Panc1 (cell line): ENCODE measurements at regions of chr6 and their contacts with region 1.

Region 1: DNA sequence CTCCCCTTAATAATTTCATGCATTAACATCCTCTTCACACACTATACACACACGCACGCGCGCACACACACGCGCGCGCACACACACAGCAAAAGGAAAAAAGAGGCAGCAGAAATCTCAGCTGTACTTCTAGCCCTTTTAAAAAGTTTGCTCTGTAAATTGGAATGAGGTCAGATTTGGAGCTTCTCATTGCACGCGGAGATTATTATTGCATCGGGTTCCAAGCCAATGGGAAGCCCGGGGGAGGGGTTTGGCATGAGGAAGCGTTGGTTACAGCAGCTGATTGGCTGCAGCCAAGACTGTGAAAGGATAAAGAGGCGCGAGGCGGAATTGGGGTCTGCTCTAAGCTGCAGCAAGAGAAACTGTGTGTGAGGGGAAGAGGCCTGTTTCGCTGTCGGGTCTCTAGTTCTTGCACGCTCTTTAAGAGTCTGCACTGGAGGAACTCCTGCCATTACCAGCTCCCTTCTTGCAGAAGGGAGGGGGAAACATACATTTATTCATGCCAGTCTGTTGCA is at the start of gene SOX4:
- DNase-seq: peak; percentile 82
- ATAC-seq: peak; percentile 80
- H3K4me3 ChIP-seq: peak within 1 kb of the TSS; percentile 95 to 96
- H3K27ac ChIP-seq: peak within 1 kb of the TSS; percentile 96
- H3K4me1 ChIP-seq: peaks cover 25% of the 10 kb centered on the region
- H3K27me3 ChIP-seq: no peaks in the 10 kb centered on the region
- CTCF ChIP-seq: no peak
- total RNA-seq, gene SOX4: 71.9 TPM

Region 2: DNA sequence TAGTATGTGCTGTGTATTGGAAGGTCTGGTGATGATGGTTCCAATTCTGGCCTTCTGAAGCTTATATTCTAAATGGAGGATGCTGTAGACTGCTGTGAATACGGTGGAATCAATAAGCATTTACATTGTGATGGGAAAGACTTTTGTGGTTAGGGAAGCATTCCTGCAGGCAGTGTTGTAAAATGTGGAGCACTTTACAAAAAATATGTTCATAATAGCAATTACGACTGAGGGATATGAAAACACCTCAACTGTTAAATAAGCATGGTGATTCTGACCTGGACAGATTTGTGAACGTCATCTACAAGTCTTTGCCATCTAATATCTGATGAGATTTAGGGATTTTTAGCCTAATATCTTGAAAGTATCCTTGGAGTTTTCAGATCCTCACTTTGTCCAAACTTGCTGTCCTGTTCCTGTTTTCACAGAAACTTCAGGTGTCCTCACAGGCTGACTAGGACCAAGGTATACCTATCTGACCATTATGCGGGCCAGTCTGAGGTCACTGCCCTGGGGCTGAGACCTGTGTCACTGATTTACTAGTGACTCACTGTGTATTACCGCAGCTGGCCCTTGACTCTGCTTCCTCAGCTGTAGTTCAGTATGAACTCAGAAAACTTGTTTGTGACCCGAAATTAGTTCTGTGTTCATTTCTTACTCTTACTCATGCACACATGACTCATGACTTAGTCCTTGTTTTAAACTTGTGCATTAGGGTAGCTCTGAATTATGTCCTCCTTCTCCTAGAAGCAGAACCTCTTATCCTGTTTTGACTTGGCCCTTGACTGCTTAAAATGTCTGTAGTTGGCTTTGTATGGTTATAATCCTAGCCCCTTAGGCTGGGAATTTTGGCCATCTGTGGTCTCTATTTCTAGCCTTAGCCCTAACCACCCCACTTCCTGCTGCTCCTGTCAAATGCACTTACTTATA is 716.2 kb before region 1 on chr6:
- CTCF ChIA-PET with region 1: interaction called, 6 read pairs
- POLR2A ChIA-PET with region 1: interaction called, 8 read pairs
- in situ Hi-C with region 1: no loop called
- intact Hi-C with region 1: loop called (anchors 5 kb)
- DNase-seq: peak; percentile 93
- ATAC-seq: peak; percentile 100
- H3K4me3 ChIP-seq: 0 out of 4 replicates have a peak overlapping the region, but pooled peaks of 1 of the 2 experiments have one; percentile 5
- H3K27ac ChIP-seq: peak overlapping the region; percentile 83
- H3K4me1 ChIP-seq: peaks cover 24% of the 10 kb centered on the region
- H3K27me3 ChIP-seq: no peaks in the 10 kb centered on the region
- CTCF ChIP-seq: no peak

Region 3: GRCh38 chr6:21132856-21133838 is 460.3 kb before region 1 on chr6:
- CTCF ChIA-PET with region 1: no interaction called
- POLR2A ChIA-PET with region 1: interaction called, 11 read pairs
- in situ Hi-C with region 1: no loop called
- intact Hi-C with region 1: no loop called
- DNase-seq: no peak
- ATAC-seq: no peak
- H3K4me3 ChIP-seq: no peak overlapping the region
- H3K27ac ChIP-seq: 0 out of 2 replicates have a peak overlapping the region, but pooled peaks have one; percentile 7
- H3K4me1 ChIP-seq: peaks cover 2% of the 10 kb centered on the region; the same call in 1 of the 2 replicates
- H3K27me3 ChIP-seq: no peaks in the 10 kb centered on the region
- CTCF ChIP-seq: no peak

Region 4: GRCh38 chr6:21494505-21494904 is 99.0 kb before region 1 on chr6:
- CTCF ChIA-PET with region 1: no interaction called
- POLR2A ChIA-PET with region 1: no interaction called
- in situ Hi-C with region 1: no loop called
- intact Hi-C with region 1: no loop called
- DNase-seq: no peak
- ATAC-seq: no peak
- H3K4me3 ChIP-seq: no peak overlapping the region
- H3K27ac ChIP-seq: no peak overlapping the region
- H3K4me1 ChIP-seq: no peaks in the 10 kb centered on the region
- H3K27me3 ChIP-seq: no peaks in the 10 kb centered on the region
- CTCF ChIP-seq: no peak

Region 5: GRCh38 chr6:21742238-21742660 is 148.8 kb after region 1 on chr6:
- CTCF ChIA-PET with region 1: interaction called, 3 read pairs
- POLR2A ChIA-PET with region 1: no interaction called
- in situ Hi-C with region 1: no loop called
- intact Hi-C with region 1: loop called (anchors 5 kb)
- DNase-seq: no peak
- ATAC-seq: peak; percentile 39; the same call in 1 of the 2 replicates
- H3K4me3 ChIP-seq: peak overlapping the region in 1 of 2 experiments; percentile 26; a peak in 2 of 4 replicates
- H3K27ac ChIP-seq: peak overlapping the region; percentile 61
- H3K4me1 ChIP-seq: peaks cover 61% of the 10 kb centered on the region
- H3K27me3 ChIP-seq: no peaks in the 10 kb centered on the region
- CTCF ChIP-seq: no peak

Region 6: GRCh38 chr6:21935561-21936028 is 342.1 kb after region 1 on chr6:
- CTCF ChIA-PET with region 1: no interaction called
- POLR2A ChIA-PET with region 1: no interaction called
- in situ Hi-C with region 1: no loop called
- intact Hi-C with region 1: loop called (anchors 5 kb)
- DNase-seq: no peak
- ATAC-seq: peak; percentile 71
- H3K4me3 ChIP-seq: no peak overlapping the region
- H3K27ac ChIP-seq: peak overlapping the region; percentile 45; the same call in 1 of the 2 replicates
- H3K4me1 ChIP-seq: no peaks in the 10 kb centered on the region
- H3K27me3 ChIP-seq: no peaks in the 10 kb centered on the region
- CTCF ChIP-seq: peak; percentile 69

Region 7: DNA sequence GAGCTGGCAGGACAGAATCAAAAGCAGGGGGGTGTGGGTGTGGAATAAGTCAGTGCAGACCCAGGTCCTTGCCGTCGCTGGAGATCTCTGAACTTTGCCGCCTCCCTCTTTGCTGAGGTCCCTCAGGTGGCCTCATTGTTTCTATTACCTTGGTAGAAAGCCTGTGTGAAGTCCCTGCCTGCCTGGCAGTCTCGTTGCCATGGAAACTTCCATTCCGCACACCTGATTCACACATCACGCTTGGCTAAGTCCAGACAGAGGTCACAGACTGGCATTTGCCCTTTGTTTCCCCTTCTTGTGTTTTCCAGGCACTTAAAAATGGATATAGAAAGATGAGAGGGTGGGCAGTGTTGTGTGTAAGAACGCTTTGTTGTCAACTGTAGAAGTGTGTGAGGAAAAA is 442.8 kb after region 1 on chr6:
- CTCF ChIA-PET with region 1: no interaction called
- POLR2A ChIA-PET with region 1: no interaction called
- in situ Hi-C with region 1: no loop called
- intact Hi-C with region 1: no loop called
- DNase-seq: peak; percentile 7
- ATAC-seq: peak; percentile 80
- H3K4me3 ChIP-seq: no peak overlapping the region
- H3K27ac ChIP-seq: peak overlapping the region; percentile 55
- H3K4me1 ChIP-seq: peaks cover 14% of the 10 kb centered on the region
- H3K27me3 ChIP-seq: no peaks in the 10 kb centered on the region
- CTCF ChIP-seq: no peak

Region 8: GRCh38 chr6:22828179-22829062 is 1235.0 kb after region 1 on chr6:
- CTCF ChIA-PET with region 1: no interaction called
- POLR2A ChIA-PET with region 1: no interaction called
- in situ Hi-C with region 1: no loop called
- intact Hi-C with region 1: loop called (anchors 5 kb)
- DNase-seq: peak; percentile 74
- ATAC-seq: peak; percentile 87
- H3K4me3 ChIP-seq: peak overlapping the region; percentile 3 to 40; a peak in 2 of 4 replicates
- H3K27ac ChIP-seq: peak overlapping the region; percentile 72
- H3K4me1 ChIP-seq: peaks cover 20% of the 10 kb centered on the region
- H3K27me3 ChIP-seq: no peaks in the 10 kb centered on the region
- CTCF ChIP-seq: peak; percentile 92

Region 9: DNA sequence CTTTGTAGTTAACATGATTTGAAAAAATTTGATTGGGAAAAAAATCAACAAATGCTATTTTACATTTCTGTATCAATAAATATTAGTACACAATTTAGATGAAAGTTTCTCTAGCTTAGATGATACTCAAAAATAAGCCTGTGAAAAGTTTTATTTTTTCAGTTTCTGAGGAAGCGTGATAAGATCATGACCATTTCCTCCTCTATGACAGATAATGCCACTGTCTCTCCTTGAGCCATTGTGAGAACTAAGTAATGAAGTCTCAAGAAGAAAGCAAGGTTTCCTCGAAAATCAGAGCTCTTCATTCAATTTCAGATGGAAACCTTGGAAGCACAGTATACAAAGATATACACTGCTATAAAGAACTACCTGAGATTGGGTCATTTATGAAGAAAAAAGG is 1370.9 kb after region 1 on chr6:
- CTCF ChIA-PET with region 1: no interaction called
- POLR2A ChIA-PET with region 1: interaction called, 12 read pairs
- in situ Hi-C with region 1: no loop called
- intact Hi-C with region 1: no loop called
- DNase-seq: no peak
- ATAC-seq: no peak
- H3K4me3 ChIP-seq: no peak overlapping the region
- H3K27ac ChIP-seq: no peak overlapping the region
- H3K4me1 ChIP-seq: no peaks in the 10 kb centered on the region
- H3K27me3 ChIP-seq: no peaks in the 10 kb centered on the region
- CTCF ChIP-seq: no peak